Gastrocnemius medialis (tissue), 4 donors: ENCODE measurements at regions of chr3 and their contacts with region 1.

Region 1: GRCh38 chr3:147654827-147655226 is 245.7 kb downstream of the ZIC1 start:
- DNase-seq: no peak
- ATAC-seq: no peak
- H3K4me3 ChIP-seq: no peak overlapping the region
- H3K27ac ChIP-seq: peak overlapping the region in 3 of 4 donors; percentile 46 to 52 (median 51)
- H3K4me1 ChIP-seq: peaks cover 19 to 49% of the 10 kb centered on the region in 2 donors
- H3K27me3 ChIP-seq: no peaks in the 10 kb centered on the region
- CTCF ChIP-seq: no peak
- POLR2A ChIP-seq: no peak

Region 2: DNA sequence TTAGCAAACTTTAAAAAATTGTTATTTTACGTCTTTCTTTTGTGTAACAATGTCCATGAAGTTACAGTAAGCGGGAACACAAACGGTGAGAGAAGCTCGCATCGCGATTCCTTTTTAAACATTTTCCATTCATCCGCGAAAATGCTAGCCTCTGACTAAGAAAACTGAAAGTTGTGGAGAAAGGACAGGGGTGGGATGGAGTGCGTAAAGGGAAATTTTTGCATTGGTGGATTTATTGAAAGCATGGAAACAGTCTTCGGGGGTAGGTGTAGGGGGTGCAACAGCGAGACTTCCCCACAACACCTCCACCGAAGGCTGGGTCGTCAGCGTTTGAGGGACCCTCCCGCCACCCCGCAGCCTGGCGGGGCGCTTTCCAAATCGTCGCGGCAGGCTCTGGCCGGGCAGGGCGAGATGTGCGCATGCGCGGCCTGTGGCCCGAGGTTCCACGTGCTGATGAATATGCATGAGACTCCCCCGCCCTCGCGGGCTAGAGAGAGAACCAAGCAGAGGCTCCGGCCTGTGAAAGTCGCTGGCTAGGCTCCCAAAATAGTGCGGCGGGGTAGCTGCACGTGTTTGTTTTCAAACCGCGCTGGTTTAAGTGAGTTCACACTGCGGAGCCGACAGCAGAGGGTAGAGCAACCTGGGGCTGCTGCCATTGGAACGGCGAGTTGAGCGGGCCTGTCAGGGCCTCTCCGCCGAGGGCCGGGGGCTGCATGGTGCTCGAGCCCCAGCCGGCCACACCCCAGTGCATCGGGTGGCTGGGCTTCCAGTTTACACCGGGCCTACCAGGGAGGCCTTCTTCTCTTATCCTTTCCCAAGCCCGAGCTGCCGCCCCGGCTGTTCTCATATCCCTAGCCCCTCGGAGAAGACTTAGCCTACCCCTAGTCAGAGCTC is 235.8 kb before region 1 on chr3:
- in situ Hi-C with region 1: no loop called
- intact Hi-C with region 1: loop called (anchors 10 kb)
- DNase-seq: peak; percentile 72 to 93
- ATAC-seq: peak; percentile 75 to 83
- H3K4me3 ChIP-seq: peak overlapping the region; percentile 50 to 66 (median 57)
- H3K27ac ChIP-seq: peak overlapping the region; percentile 77 to 80 (median 79)
- H3K4me1 ChIP-seq: peaks cover 11 to 13% of the 10 kb centered on the region in 2 donors
- H3K27me3 ChIP-seq: peaks cover 3 to 32% (median 6%) of the 10 kb centered on the region in 3 donors
- CTCF ChIP-seq: no peak
- POLR2A ChIP-seq: peak; percentile 52 to 69

Region 3: GRCh38 chr3:147538034-147538433 is 116.8 kb before region 1 on chr3:
- in situ Hi-C with region 1: no loop called
- intact Hi-C with region 1: no loop called
- DNase-seq: no peak
- ATAC-seq: no peak
- H3K4me3 ChIP-seq: no peak overlapping the region
- H3K27ac ChIP-seq: no peak overlapping the region
- H3K4me1 ChIP-seq: no peaks in the 10 kb centered on the region
- H3K27me3 ChIP-seq: no peaks in the 10 kb centered on the region
- CTCF ChIP-seq: no peak
- POLR2A ChIP-seq: no peak

Region 4: GRCh38 chr3:147758771-147759170 is 103.9 kb after region 1 on chr3:
- in situ Hi-C with region 1: no loop called
- intact Hi-C with region 1: loop called (anchors 5 kb)
- DNase-seq: no peak
- ATAC-seq: peak; percentile 93 to 96
- H3K4me3 ChIP-seq: no peak overlapping the region
- H3K27ac ChIP-seq: peak overlapping the region; percentile 57 to 83 (median 75)
- H3K4me1 ChIP-seq: peaks cover 39 to 41% of the 10 kb centered on the region in 2 donors
- H3K27me3 ChIP-seq: no peaks in the 10 kb centered on the region
- CTCF ChIP-seq: no peak
- POLR2A ChIP-seq: no peak